OCI-LY7 (cell line): ENCODE measurements at regions of chr13 and their contacts with region 1.

Region 1: DNA sequence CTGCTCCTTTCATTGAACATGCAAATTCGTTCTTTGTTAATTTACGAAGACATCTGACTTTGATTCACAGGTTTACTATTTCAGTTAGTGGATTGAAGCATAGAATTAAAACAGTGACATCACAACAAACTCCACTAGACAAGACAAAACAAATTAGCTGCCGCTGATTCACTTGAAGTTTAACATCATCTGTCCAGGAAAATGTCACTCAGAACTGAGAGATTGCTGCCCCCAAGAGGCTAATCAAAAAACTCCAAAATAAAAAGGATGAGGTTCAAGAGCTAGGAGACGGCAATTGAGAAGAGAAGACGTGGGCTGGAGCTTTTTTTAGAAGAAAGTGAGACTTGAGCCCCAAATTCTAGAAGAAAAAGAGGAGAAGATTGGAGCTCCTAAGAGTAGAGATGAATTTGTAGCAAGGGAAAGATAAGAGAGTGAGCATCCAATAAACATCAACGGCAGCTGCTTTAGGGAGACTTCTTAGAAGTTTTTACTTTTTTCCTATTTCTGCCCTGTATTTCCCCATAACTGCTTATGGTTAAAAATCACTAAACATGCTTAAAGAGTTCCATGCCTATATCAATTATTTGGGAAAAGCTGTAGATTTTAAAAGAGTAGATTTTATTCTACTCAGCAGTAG is 40.8 kb upstream of the TPP2 start:
- DNase-seq: peak; percentile 14
- H3K4me3 ChIP-seq: no peak overlapping the region
- H3K27ac ChIP-seq: no peak overlapping the region
- H3K4me1 ChIP-seq: no peaks in the 10 kb centered on the region
- CTCF ChIP-seq: peak; percentile 68

Region 2: GRCh38 chr13:101942038-101942437 is 614.0 kb before region 1 on chr13:
- CTCF ChIA-PET with region 1: no interaction called
- POLR2A ChIA-PET with region 1: interaction called, 3 read pairs
- intact Hi-C with region 1: loop called (anchors 5 kb)
- DNase-seq: peak; percentile 4
- H3K4me3 ChIP-seq: no peak overlapping the region
- H3K27ac ChIP-seq: no peak overlapping the region
- H3K4me1 ChIP-seq: no peaks in the 10 kb centered on the region
- CTCF ChIP-seq: peak; percentile 67

Region 3: DNA sequence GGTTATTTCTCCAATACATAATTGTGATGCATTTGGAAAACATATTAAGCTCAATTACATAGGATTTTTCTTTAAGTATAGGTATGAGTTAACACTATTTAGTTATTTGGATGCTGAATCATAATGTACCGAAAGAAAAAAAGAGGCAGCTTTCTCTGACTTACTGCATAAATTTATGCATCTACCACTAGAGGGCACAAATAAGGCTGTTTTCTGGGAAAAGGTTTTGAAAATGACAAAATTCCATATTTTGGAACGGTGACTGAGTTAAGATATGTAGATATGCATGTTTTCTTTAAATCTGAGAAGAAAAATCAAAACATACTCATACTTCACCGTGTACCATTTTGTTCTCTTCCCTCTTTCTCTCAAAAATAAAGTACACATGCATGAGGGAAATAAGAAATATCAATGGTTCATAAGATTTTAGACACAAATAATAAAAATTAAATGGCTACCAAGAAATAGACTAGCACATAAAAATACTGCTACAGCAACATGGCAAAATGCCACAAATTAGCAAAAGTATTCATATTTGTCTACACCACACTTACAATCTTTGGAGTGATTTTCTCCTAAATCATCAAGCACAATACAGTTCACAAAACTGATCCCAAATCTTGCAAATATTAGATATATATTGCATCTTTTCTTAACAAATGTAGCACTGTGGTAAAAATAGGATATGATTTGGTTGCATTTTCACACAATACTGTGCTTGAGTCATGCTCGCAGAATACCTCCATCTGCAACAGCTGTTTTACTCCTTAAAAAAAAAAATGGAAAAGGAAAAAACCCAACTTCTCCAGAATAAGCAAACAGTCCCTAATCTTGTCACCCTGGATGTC is 414.2 kb before region 1 on chr13:
- CTCF ChIA-PET with region 1: no interaction called
- POLR2A ChIA-PET with region 1: no interaction called
- intact Hi-C with region 1: loop called (anchors 5 kb)
- DNase-seq: peak; percentile 1
- H3K4me3 ChIP-seq: no peak overlapping the region
- H3K27ac ChIP-seq: no peak overlapping the region
- H3K4me1 ChIP-seq: no peaks in the 10 kb centered on the region
- CTCF ChIP-seq: peak; percentile 74

Region 4: GRCh38 chr13:102757006-102757405 is 201.0 kb after region 1 on chr13:
- CTCF ChIA-PET with region 1: no interaction called
- POLR2A ChIA-PET with region 1: no interaction called
- intact Hi-C with region 1: no loop called
- DNase-seq: no peak
- H3K4me3 ChIP-seq: no peak overlapping the region
- H3K27ac ChIP-seq: no peak overlapping the region
- H3K4me1 ChIP-seq: no peaks in the 10 kb centered on the region
- CTCF ChIP-seq: no peak